ENCODE measurements at regions of chr3 and their contacts with region 1.

Region 1: DNA sequence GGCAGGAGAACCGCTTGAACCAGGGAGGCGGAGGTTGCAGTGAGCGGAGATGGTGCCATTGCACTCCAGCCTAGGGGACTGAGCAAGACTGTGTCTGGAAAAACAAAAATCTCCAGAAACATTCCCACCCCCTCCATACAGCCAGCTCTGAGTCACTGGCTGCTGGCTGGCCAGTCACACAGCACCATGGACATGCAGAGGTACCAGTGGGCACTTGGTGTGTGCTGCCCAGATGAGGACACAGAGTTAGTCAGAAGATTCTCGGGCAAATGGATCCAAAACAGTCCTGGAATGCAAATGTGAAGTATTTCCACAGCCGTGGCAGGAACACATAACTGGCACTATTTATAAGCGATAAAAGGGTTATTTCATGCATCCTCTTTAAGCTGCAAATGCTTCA is 44.6 kb downstream of the BDH1 start:
- DNase-seq: no peak
- H3K4me3 ChIP-seq: no peak overlapping the region
- H3K4me3 Mint-ChIP-seq: no peak overlapping the region
- H3K27ac ChIP-seq: no peak overlapping the region
- H3K27ac Mint-ChIP-seq: no peak overlapping the region
- H3K4me1 ChIP-seq: peaks cover 8% of the 10 kb centered on the region
- H3K4me1 Mint-ChIP-seq: peaks cover 0 to 9% (median 3%) of the 10 kb centered on the region in 4 donors
- H3K27me3 ChIP-seq: no peaks in the 10 kb centered on the region
- H3K27me3 Mint-ChIP-seq: no peaks in the 10 kb centered on the region

Region 2: GRCh38 chr3:197002701-197003454 is 508.3 kb before region 1 on chr3:
- CTCF ChIA-PET with region 1: no interaction called
- POLR2A ChIA-PET with region 1: no interaction called
- intact Hi-C with region 1: loop called (anchors 2 kb)
- DNase-seq: peak; percentile 77 to 86 (median 80)
- H3K4me3 ChIP-seq: no peak overlapping the region
- H3K4me3 Mint-ChIP-seq: no peak overlapping the region
- H3K27ac ChIP-seq: peak overlapping the region; percentile 47
- H3K27ac Mint-ChIP-seq: no peak overlapping the region
- H3K4me1 ChIP-seq: peaks cover 9% of the 10 kb centered on the region
- H3K4me1 Mint-ChIP-seq: peaks cover 5 to 17% (median 8%) of the 10 kb centered on the region in 4 donors
- H3K27me3 ChIP-seq: no peaks in the 10 kb centered on the region
- H3K27me3 Mint-ChIP-seq: no peaks in the 10 kb centered on the region

Region 3: DNA sequence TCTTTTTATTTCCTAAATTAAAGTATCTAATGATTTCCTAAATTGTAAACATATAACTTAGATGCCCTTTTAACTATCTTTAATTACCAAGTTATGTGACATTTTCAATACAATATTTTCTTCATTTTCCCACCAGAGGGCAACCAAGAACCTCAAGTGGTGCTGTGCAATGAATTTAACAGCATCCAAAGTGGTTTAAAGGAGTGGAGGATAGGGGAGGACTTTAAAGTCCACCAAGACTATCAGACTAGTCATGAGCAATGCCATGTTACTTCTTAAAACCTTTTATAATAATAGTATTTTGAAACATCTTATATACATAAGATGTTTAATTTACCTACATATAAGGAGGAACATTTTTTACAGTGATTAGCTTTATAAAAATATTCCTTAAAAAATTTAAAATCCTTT is 287.1 kb before region 1 on chr3:
- CTCF ChIA-PET with region 1: interaction called, 8 read pairs
- POLR2A ChIA-PET with region 1: no interaction called
- intact Hi-C with region 1: loop called (anchors 1 kb)
- DNase-seq: peak in 4 of 5 donors; percentile 18 to 37 (median 28)
- H3K4me3 ChIP-seq: no peak overlapping the region
- H3K4me3 Mint-ChIP-seq: no peak overlapping the region
- H3K27ac ChIP-seq: no peak overlapping the region
- H3K27ac Mint-ChIP-seq: peak overlapping the region in 1 of 7 donors; percentile 14
- H3K4me1 ChIP-seq: peaks cover 13% of the 10 kb centered on the region
- H3K4me1 Mint-ChIP-seq: peaks cover 21 to 44% (median 36%) of the 10 kb centered on the region in 4 donors
- H3K27me3 ChIP-seq: no peaks in the 10 kb centered on the region
- H3K27me3 Mint-ChIP-seq: no peaks in the 10 kb centered on the region

Region 4: DNA sequence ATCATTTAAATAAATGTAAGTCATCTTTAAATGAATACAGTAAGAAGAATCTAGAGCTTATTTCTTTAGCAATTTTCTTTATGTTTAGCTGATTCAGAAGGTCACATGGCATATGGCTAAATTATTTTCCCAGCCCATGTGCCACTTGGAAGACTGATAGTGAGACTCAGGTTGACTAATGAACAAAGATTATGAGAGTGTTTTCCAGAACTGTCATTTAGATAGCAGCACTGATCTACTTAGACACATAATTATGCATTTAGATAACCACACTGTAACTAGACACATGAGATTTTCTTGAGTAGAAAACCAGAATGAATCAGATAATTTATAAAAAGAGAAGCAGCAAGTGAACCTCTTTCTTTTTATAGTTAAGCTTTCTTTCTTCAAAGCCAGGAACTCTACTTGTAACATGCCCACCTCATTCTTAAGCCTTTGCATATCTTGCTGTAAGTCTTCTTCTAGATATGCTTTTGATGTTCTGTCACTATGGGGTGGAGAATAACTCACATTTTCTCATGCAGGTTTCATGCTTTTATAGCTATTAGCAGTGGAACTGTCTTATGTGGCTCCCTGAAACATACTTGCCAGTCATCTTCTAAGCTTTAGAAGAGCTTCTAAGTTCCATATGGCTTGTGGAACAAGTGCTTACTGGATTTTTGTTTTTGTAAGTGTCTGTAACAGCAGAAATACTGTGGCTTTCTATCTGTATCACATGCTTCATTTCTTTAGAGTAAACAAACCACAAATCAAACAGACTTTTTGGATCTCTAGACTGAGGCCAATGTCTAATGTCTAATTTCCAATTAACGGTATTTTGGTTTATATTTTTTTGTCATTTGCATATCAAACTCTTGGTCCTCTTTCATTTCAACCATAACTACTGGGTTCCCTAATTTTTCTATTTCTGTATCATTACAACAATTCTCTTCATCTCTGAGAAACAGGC is 550.3 kb after region 1 on chr3:
- CTCF ChIA-PET with region 1: no interaction called
- POLR2A ChIA-PET with region 1: no interaction called
- intact Hi-C with region 1: no loop called
- DNase-seq: no peak
- H3K4me3 ChIP-seq: no peak overlapping the region
- H3K4me3 Mint-ChIP-seq: no peak overlapping the region
- H3K27ac ChIP-seq: no peak overlapping the region
- H3K27ac Mint-ChIP-seq: no peak overlapping the region
- H3K4me1 ChIP-seq: no peaks in the 10 kb centered on the region
- H3K4me1 Mint-ChIP-seq: no peaks in the 10 kb centered on the region
- H3K27me3 ChIP-seq: no peaks in the 10 kb centered on the region
- H3K27me3 Mint-ChIP-seq: peaks cover 3 to 6% of the 10 kb centered on the region in 2 donors

Measured in CD4-positive, alpha-beta memory T cell (primary cell).